CD4-positive, alpha-beta T cell (primary cell): ENCODE measurements at regions of chr7 and their contacts with region 1.

Region 1: GRCh38 chr7:120941064-120941463 is 9.5 kb upstream of the ING3 start:
- DNase-seq: peak in 2 of 14 experiments; percentile 21 to 27
- ATAC-seq: no peak
- H3K4me3 ChIP-seq: no peak overlapping the region
- H3K4me3 Mint-ChIP-seq: no peak overlapping the region
- H3K27ac ChIP-seq: no peak overlapping the region
- H3K27ac Mint-ChIP-seq: no peak overlapping the region
- H3K4me1 ChIP-seq: no peaks in the 10 kb centered on the region
- H3K4me1 Mint-ChIP-seq: no peaks in the 10 kb centered on the region
- H3K27me3 ChIP-seq: no peaks in the 10 kb centered on the region
- H3K27me3 Mint-ChIP-seq: peaks cover 4% of the 10 kb centered on the region
- CTCF ChIP-seq: peak; percentile 29

Region 2: DNA sequence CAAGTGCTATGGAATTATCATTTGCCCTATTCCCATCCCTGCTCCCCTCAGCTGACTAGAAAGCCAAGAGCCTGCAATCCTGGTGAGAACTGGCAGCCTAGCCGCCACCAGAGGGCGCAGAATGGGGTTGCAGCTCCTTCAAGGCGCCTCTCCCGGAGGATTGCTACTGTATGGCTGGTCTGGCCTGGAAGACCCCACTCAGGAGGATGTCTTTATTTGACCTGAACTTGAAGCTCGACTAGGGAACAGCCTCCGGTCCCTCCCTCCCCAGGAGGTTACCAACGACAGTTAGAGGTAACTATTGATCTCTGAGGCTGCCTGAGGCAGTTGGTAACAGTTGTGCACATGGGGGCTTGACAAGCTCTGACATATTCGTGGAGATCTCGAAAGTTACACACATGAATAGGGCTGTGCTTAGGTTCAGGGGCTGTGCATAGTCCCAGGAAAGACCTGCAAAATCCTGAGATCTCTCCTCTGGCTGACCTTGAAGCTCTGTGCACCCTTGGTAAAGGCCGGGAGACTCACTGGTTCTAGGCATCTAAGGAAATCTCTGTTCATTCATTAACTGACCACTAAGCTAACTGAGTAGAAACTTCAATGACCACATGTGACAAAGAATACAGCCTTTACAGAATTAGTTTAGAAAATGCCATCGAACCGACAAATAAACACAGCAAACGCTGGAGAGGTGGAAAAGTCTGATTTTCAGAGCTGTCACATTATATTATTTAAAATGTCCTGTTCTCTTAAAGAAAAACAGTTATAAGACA is 148.8 kb before region 1 on chr7:
- CTCF ChIA-PET with region 1: no interaction called
- POLR2A ChIA-PET with region 1: no interaction called
- intact Hi-C with region 1: loop called (anchors 5 kb)
- DNase-seq: peak; percentile 22 to 69 (median 42)
- ATAC-seq: no peak
- H3K4me3 ChIP-seq: no peak overlapping the region
- H3K4me3 Mint-ChIP-seq: no peak overlapping the region
- H3K27ac ChIP-seq: no peak overlapping the region
- H3K27ac Mint-ChIP-seq: no peak overlapping the region
- H3K4me1 ChIP-seq: no peaks in the 10 kb centered on the region
- H3K4me1 Mint-ChIP-seq: no peaks in the 10 kb centered on the region
- H3K27me3 ChIP-seq: peaks cover 3 to 4% of the 10 kb centered on the region in 2 experiments
- H3K27me3 Mint-ChIP-seq: peaks cover 5% of the 10 kb centered on the region
- CTCF ChIP-seq: peak; percentile 80